ENCODE measurements at regions of chr6 and their contacts with region 1.

Region 1: GRCh38 chr6:108835218-108835850 is 12.9 kb upstream of the ARMC2 start:
- DNase-seq: peak; percentile 85 to 88
- H3K4me3 ChIP-seq: no peak overlapping the region
- H3K27ac ChIP-seq: peak overlapping the region in 1 of 2 donors; percentile 22
- H3K4me1 ChIP-seq: no peaks in the 10 kb centered on the region
- H3K27me3 ChIP-seq: no peaks in the 10 kb centered on the region
- CTCF ChIP-seq: peak; percentile 84 to 95 (median 90)
- POLR2A ChIP-seq: peak in 1 of 2 donors; percentile 10

Region 2: GRCh38 chr6:108541838-108542759 is 293.2 kb before region 1 on chr6:
- intact Hi-C with region 1: loop called (anchors 5 kb)
- DNase-seq: peak; percentile 74 to 77
- H3K4me3 ChIP-seq: no peak overlapping the region
- H3K27ac ChIP-seq: no peak overlapping the region
- H3K4me1 ChIP-seq: no peaks in the 10 kb centered on the region
- H3K27me3 ChIP-seq: no peaks in the 10 kb centered on the region
- CTCF ChIP-seq: peak; percentile 80 to 95 (median 86)
- POLR2A ChIP-seq: no peak

Region 3: DNA sequence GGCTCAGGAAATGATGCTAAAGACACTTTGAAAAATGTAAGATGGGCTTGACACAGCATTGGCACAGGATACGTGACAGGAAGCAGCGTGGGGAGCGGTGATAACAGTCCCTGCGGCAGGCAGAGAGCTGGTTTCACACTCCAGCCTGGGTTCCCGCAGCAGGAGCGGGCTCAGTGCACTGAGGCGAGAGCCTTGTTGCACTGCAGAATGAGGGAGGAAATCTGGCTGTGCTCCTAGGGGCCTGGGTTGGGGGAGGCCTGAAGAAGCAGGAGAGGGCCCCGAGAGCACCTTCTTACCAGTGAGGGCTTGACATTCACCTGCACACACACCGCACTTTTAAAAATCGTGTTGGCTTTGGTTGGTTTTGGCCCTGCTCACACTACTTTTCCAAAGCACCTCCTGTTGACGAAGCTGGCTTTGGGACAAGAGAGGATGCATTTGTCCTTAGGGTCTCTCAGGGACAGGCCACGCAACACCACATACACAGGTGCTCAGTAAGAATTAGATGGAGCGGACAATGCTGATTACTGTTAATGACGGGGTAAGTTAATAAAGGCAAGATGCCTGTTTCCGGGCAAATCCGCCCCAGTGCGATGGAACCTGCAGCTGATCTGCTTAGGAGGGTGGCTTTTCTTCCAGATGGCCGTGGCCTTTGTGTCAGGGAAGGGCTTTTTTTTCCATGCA is 36.5 kb before region 1 on chr6:
- intact Hi-C with region 1: no loop called
- DNase-seq: peak in 1 of 2 donors; percentile 32
- H3K4me3 ChIP-seq: no peak overlapping the region
- H3K27ac ChIP-seq: no peak overlapping the region
- H3K4me1 ChIP-seq: no peaks in the 10 kb centered on the region
- H3K27me3 ChIP-seq: no peaks in the 10 kb centered on the region
- CTCF ChIP-seq: no peak
- POLR2A ChIP-seq: no peak

Measured in uterus (tissue), 4 donors.